Sigmoid colon (tissue), 7 donors: ENCODE measurements at regions of chrX and their contacts with region 1.

Region 1: GRCh38 chrX:16719334-16720084 is at the start of gene SYAP1:
- DNase-seq: peak; percentile 99
- H3K4me3 ChIP-seq: peak within 1 kb of the TSS; percentile 62 to 83 (median 67)
- H3K27ac ChIP-seq: peak within 1 kb of the TSS; percentile 91 to 96 (median 94)
- H3K4me1 ChIP-seq: peaks cover 0 to 22% (median 12%) of the 10 kb centered on the region in 4 donors
- H3K27me3 ChIP-seq: no peaks in the 10 kb centered on the region
- CTCF ChIP-seq: no peak
- EP300 ChIP-seq: peak in 2 of 4 donors; percentile 67 to 86
- POLR2A ChIP-seq: peak; percentile 90 to 92
- total RNA-seq, gene SYAP1: 17.5 to 19.9 (median 19.4) TPM

Region 2: DNA sequence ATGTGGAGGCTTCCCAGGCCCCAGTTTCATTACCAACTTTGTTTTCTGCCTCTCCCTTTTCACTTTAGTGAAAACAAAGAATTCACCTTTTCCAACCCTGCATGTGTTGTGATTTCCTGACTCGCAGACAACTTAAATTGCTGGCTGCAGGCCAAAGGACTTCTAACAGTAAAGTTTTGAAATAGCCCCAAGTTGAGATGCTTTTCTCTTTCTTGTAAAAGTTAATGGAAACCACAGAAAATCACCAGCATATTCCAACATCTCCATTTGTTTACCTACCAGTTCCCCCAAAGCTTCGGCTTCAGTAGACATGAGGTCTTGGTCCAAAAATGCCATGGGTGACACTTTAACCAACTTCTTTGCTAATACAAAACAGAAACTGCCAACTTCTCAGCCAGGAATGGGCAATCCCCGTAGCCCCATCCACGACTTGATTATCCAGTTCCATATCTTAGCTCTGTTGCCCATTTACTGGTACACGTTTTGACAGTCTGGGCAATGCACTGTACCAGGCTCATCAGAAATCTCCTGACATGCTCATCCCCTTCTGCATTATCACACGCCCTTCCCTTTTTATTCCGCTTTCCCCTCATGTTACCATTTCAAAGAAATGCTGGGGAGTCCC is 207.6 kb before region 1 on chrX:
- intact Hi-C with region 1: no loop called
- DNase-seq: no peak
- H3K4me3 ChIP-seq: no peak overlapping the region
- H3K27ac ChIP-seq: no peak overlapping the region
- H3K4me1 ChIP-seq: no peaks in the 10 kb centered on the region
- H3K27me3 ChIP-seq: no peaks in the 10 kb centered on the region
- CTCF ChIP-seq: no peak
- EP300 ChIP-seq: no peak
- POLR2A ChIP-seq: no peak

Region 3: DNA sequence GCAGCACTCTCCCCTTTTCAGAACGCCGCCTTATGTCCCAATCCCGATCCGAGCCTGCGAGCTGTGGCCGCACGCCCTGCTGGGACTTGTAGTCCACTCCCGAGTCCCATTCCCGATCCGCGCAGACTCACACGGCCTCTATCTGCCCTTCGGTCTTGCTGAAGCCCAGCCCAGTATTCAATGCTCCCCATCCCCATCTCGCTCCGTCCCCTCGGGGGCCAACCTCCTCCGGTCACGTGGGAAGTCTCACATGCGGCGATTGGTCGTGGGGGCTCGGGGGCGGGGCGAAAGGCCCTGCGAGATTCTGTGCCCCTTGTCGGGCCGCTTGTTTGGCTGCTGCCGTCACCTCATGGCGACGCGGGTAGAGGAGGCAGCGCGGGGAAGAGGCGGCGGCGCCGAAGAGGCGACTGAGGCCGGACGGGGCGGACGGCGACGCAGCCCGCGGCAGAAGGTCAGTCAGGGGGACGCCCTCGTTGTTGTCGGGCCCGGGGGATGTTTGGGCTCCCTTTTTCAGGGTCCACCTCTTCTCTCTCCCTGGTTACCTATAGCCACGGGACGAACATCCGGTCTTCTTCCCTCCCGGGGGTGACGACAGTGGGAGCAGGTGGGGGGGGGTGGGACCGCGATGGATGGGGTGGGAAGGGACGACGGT is 66.8 kb after region 1 on chrX and contains the start of gene TXLNG:
- intact Hi-C with region 1: loop called (anchors 1 kb)
- DNase-seq: peak; percentile 100
- H3K4me3 ChIP-seq: peak within 1 kb of the TSS; percentile 73 to 85 (median 78)
- H3K27ac ChIP-seq: peak within 1 kb of the TSS; percentile 87 to 93 (median 90)
- H3K4me1 ChIP-seq: peaks cover 0 to 21% (median 7%) of the 10 kb centered on the region in 4 donors
- H3K27me3 ChIP-seq: peaks cover 0 to 3% (median 0%) of the 10 kb centered on the region in 3 donors
- CTCF ChIP-seq: no peak
- EP300 ChIP-seq: no peak
- POLR2A ChIP-seq: peak; percentile 67 to 81
- total RNA-seq, gene TXLNG: 11.5 to 20.1 (median 13.2) TPM

Region 4: DNA sequence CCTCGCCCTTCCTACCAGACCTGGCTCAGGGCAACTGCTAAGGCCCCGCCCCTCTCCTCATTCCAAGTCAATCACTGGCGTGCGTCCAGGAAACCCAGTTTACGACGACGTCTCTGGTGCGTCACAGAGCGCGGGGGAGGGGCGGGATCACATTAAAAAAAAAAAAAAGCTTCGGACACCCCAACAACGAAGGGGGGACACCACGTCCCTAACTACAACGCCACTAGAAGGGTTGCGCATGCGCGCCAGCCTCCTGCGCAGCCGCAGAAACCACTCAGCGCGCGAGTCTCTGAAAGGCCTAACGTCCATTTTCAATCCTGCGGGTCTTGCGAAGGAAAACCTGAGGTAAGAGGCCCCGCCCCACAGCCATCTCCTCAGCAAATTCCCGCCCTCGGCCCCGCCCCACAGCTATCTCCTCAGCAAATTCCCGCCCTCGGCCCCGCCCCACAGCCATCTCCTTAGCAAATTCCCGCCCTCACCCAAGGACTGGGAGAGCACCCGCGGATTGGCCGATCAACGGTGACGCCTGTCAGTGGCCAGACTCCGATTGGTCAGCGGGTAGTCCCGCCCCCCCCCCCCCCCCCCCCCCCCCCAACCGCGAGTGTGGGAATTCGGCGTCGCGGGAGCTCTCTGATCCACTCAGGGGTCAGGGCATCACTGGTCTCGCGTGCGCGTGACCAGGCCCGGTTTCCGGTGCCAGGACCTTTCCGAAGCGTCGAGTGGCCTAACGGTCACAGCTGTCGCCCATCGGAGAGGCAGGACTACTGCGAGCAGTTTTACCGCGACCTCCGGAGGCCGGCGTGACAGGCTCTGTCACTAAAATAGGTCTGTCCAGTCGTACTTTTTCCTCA is 1017.6 kb after region 1 on chrX and contains the start of gene SCML1:
- intact Hi-C with region 1: loop called (anchors 5 kb)
- DNase-seq: peak; percentile 99
- H3K4me3 ChIP-seq: peak within 1 kb of the TSS; percentile 51 to 61 (median 60)
- H3K27ac ChIP-seq: peak within 1 kb of the TSS; percentile 88 to 96 (median 92)
- H3K4me1 ChIP-seq: peaks cover 0 to 18% (median 0%) of the 10 kb centered on the region in 4 donors
- H3K27me3 ChIP-seq: no peaks in the 10 kb centered on the region
- CTCF ChIP-seq: no peak
- EP300 ChIP-seq: peak in 1 of 4 donors; percentile 65
- POLR2A ChIP-seq: peak; percentile 69 to 70
- total RNA-seq, gene SCML1: 10.7 to 15.3 (median 13.2) TPM